ENCODE measurements at regions of chr14 and their contacts with region 1.

Region 1: GRCh38 chr14:54329082-54329695 is 67.6 kb upstream of the CDKN3 start:
- DNase-seq: peak; percentile 24
- CTCF ChIP-seq: peak; percentile 61

Region 2: DNA sequence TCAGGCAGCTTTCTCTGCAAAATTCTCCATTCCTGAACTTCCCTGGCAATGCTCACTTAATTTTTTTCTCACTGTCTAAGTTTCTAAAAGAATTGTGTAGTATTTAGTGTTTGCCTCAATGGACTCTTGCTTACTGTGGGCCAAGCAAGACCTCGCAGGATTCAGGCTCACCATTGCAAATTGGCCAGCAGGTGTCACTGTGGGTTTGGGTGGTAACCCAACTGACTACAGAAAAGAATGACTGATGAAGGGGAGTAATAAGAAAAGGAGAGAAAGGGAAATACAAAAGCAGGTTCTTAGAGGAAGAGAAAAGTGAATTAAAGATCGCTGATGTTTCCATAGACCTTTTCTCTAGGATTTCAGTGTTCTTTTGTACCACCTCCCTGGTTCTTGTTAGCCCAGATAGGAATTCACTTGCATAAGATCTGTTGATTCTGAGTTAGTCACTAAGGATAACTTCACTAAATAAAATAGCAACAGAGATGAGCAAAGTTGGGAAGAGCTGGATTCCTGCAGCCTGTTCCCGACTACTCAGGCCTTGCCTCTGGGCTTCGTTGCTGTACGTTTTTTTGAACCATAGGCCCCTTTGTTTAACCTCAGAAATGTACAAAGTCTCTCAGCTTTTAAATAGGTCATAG is 789.6 kb before region 1 on chr14:
- in situ Hi-C with region 1: loop called (anchors 25 kb)
- DNase-seq: peak; percentile 38
- CTCF ChIP-seq: peak; percentile 86

Region 3: DNA sequence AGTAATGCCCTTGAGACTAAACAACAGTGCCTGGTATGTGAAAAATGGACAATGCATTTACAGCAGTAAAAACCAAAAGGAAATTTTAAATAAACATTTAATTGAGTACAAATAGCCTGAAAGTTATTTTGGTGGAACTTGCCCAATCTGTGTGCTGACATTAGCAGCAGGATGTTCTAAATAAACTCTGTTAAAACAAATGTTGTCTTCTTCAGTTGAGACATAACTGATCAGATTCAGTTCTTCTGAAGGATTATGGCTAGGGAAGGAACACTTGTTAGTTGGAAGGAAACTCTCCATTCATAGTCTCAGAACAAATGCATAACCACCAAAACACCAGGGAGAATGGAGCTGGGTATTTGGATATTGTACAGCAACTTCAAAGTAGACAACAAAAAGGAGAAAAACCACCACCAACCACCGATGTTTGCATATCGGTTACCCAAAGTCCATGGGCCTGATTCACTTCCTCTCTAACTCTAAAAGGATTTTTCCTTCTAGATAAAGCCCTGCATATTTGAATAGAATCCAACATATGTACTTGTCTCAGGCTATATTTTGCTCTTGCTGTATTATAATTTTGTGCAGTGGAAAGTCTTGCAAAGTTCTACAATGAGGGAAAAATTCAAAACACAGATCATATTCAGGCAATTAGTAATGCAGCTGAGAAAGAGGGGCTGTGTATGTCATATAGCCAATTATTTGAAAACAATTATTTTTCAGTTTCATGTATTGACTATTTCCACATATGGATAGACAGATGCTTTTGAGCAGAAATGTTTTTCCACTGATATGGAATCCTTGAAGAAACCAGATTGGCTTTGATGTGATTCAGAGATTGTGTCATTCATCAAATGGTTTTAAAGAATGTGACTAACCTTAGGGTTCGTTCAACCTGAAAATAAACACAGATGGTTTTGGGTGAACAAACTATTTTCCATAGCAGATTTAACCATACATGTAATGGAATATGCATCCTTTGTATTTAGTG is 220.4 kb before region 1 on chr14:
- in situ Hi-C with region 1: no loop called
- DNase-seq: no peak
- CTCF ChIP-seq: no peak

Region 4: DNA sequence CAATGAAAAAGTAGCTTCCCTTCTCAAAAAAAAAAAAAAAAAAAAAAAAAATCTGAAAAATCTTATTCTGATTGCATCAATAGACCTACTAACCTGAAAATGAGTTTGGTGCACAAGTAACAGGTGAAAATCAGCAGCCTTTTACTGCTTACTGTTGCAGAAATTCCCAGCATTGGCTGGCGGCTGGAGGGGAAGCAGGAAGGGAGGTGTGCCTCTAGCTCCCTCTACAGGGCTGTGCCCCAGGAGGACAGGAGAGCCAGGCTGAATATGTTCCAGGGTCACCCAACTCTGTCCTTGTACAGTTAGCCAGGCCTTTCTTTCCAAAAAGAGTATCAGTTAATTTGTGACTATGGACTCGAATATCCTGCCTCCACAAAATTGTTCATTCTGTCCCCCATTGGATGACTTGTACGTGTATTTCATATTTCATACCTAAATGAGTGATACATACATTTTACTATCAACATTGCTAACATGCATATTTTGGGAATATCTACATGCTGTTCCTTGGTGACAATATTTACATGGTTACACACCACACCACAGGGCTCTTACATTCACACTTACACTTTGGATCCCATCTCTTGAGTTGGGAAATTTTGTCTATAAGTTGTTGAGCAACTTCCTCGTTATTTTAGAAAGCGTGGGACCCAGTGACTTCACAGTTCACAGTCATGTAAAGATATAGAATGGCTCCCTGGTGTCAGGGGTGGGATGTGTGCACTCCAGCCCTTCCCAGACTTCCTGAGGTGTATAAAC is 362.5 kb after region 1 on chr14:
- in situ Hi-C with region 1: no loop called
- DNase-seq: peak; percentile 34
- CTCF ChIP-seq: peak; percentile 84

Measured in GM13977 (cell line).